Transverse colon (tissue), 4 donors: ENCODE measurements at regions of chr1 and their contacts with region 1.

Region 1: DNA sequence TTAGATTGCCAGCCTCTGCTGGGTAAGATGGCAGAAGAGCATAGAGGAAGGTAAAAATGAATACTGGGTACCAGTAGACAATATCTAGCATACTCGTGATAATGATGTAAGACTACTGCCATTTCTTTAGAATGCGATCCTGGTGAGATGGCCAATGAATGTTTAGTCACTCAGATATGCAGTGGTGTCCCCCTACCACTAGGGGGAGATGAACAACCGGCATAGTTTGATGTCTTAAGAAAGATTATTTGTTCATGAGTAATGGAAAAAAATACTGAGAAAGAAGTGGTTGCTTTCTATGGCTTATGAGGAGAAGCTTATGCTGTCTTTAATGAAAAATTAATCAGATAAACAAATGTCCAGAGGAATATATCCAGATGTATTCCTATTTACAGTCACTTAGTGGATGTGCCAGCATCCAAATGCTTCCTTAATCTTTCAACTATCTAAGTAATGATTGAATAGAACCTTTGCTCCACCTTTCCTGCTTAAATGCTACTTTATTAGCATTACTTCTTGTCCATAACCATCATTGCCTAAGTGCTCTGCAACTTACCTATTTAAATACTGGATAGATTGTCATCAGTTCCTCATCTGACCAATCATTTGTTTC is 256.6 kb downstream of the ST6GALNAC3 start:
- DNase-seq: peak; percentile 26
- H3K4me3 ChIP-seq: no peak overlapping the region
- H3K27ac ChIP-seq: no peak overlapping the region
- H3K4me1 ChIP-seq: no peaks in the 10 kb centered on the region
- H3K27me3 ChIP-seq: no peaks in the 10 kb centered on the region
- CTCF ChIP-seq: peak; percentile 82 to 96 (median 86)
- EP300 ChIP-seq: no peak
- POLR2A ChIP-seq: no peak

Region 2: DNA sequence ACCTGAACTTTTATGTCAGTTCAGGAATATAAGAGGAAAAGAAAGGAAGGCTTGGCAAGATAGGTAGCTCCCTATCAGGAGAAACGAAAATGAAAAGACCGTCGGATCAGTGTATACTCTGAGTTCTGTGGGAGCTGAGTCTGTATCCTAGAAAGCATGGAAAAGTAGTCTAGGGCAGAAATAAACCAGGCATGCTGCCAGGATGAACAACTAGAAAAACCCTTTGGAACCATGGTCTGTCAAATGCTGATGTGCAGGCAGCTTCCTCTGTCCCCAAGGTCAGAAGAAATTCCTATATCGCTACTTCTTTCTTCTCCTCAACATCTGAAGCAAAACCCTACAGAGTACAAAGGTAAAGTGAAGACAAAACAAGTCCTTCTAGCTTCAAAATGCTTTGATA is 12.3 kb after region 1 on chr1:
- in situ Hi-C with region 1: no loop called
- intact Hi-C with region 1: loop called (anchors 1 kb)
- DNase-seq: no peak
- H3K4me3 ChIP-seq: no peak overlapping the region
- H3K27ac ChIP-seq: no peak overlapping the region
- H3K4me1 ChIP-seq: no peaks in the 10 kb centered on the region
- H3K27me3 ChIP-seq: no peaks in the 10 kb centered on the region
- CTCF ChIP-seq: no peak
- EP300 ChIP-seq: no peak
- POLR2A ChIP-seq: no peak